ENCODE measurements at regions of chr6 and their contacts with region 1.

Region 1: DNA sequence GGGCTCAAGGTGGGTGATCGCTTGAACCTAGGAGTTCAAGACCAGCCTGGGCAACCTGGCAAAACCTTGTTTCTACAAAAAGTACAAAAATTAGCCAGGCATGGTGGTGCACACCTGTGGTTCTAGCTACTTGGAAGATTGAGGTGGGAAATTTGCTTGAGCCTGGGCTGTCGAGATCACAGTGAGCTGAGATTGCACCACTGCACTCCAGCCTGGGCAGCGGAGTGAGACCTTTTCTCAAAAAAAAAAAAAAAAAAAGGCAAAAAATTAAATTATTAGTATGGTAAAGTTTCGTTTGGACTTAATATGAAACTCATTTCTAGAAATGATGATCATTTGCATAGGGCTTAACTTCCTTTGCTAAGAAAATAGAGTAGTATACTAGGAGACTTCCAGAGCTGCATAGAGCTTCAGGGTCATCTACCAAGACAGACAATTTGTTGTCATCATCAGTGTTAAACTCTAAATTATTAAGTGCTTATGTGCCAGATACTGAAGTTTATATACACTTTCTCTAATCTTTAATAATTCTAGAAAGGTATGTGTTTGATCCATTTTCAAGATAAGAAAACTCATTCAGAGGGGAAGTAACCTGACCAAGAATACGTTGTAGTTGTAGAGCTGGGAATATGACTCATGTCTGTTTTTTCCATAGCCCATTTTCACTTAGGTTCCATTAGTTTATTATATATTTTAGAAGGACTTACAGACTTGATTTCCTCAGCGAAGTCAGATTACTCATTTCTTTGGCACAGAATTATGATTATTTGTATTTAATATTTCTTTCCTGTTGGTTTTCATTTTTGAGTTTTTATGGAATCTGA is 84.5 kb downstream of the SLC16A10 start:
- DNase-seq: no peak
- H3K4me3 Mint-ChIP-seq: no peak overlapping the region
- H3K27ac Mint-ChIP-seq: no peak overlapping the region
- H3K4me1 Mint-ChIP-seq: peaks cover 27% of the 10 kb centered on the region
- H3K27me3 Mint-ChIP-seq: no peaks in the 10 kb centered on the region

Region 2: DNA sequence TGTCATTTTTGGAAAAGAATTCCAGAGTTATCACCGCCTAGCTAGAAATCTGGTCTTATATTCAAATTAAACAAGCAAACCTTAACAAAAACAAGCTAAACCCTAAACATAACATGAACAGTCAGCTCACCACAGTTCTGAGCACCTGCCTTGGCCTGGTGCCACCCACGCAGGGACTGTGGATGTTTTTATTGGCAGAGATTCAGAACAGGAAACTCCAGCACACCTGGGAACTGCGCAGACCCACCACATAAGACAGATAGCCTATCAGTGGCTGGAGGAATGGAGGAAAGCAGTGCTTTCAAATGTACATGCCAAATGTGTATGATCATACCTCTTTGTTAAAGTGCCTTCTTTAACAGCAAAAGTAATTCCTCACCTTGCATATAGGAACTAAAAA is 75.5 kb before region 1 on chr6:
- CTCF ChIA-PET with region 1: interaction called, 4 read pairs
- intact Hi-C with region 1: loop called (anchors 2 kb)
- DNase-seq: peak; percentile 77
- H3K4me3 Mint-ChIP-seq: no peak overlapping the region
- H3K27ac Mint-ChIP-seq: peak overlapping the region; percentile 6
- H3K4me1 Mint-ChIP-seq: peaks cover 25% of the 10 kb centered on the region
- H3K27me3 Mint-ChIP-seq: no peaks in the 10 kb centered on the region

Region 3: GRCh38 chr6:111183702-111184517 is 12.1 kb after region 1 on chr6:
- CTCF ChIA-PET with region 1: interaction called, 6 read pairs
- intact Hi-C with region 1: loop called (anchors 1 kb)
- DNase-seq: no peak
- H3K4me3 Mint-ChIP-seq: no peak overlapping the region
- H3K27ac Mint-ChIP-seq: no peak overlapping the region
- H3K4me1 Mint-ChIP-seq: peaks cover 10% of the 10 kb centered on the region
- H3K27me3 Mint-ChIP-seq: no peaks in the 10 kb centered on the region

Region 4: DNA sequence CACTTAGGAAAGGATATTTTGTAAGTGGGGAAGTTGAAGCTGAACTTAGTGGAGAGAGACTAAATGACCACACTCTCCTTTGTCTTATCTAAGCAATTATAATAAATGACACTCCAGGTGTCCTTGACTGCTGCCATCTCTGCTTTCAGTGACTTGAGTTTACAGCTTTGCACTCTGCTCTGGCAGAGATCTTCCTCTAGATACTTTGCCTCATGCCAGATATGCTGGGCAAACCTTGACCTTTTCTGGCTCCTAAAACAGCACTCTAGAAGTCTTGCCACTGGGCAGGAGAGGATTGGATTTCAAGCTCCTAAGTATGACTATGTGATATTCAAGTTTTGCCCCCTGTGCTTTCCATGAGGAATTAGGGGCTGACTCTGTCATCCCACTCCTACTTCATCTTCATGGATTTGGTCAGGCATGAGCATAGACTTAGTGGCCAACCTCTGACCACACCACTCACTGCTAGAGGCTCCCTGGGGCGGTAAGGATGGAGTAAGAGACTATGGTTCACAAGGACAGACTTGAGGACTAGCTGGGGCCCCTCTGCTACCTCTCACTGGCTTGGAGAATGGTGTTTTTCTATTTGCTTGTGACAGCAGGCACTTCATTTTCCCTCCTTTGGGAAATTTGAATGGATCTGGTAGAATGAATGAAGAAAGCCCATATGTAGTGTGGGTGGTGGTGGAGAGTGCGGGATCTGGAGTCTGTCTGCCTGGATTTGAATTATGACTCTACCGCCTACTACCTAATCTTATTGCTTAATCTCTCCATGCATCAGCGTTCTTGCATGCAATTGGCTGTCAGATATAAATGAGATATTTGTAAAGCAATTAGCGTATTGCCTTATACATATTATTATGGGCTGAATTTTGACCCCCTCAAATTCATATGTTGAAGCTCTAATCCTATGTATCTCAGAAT is 119.8 kb after region 1 on chr6:
- CTCF ChIA-PET with region 1: no interaction called
- intact Hi-C with region 1: no loop called
- DNase-seq: no peak
- H3K4me3 Mint-ChIP-seq: no peak overlapping the region
- H3K27ac Mint-ChIP-seq: no peak overlapping the region
- H3K4me1 Mint-ChIP-seq: peaks cover 24% of the 10 kb centered on the region
- H3K27me3 Mint-ChIP-seq: no peaks in the 10 kb centered on the region

Region 5: DNA sequence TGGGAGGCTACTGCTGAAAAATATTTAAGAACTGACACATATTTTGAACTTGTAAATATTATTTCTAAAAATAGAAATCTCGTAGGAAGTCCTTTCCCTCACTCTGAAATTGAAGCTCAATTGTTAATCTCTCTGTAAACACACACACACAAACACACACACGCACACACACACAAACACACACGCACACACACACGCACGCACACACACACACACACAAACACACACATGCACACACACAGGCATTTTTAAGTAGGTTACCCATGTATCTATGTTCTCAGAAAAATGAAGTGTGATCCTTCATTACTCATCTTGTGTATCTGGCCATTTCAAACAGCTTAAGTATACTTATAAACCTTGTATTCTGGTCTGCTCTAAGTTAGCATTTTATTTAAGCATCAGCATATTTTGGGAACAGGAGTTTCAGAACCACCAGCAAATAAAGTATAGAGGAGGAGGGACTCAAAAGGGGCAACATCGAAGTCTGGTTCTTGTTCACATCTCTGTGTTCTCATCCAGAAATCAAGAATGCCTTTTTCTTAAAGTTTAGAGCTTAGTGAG is 893.7 kb after region 1 on chr6:
- CTCF ChIA-PET with region 1: no interaction called
- intact Hi-C with region 1: no loop called
- DNase-seq: no peak
- H3K4me3 Mint-ChIP-seq: no peak overlapping the region
- H3K27ac Mint-ChIP-seq: no peak overlapping the region
- H3K4me1 Mint-ChIP-seq: peaks cover 2% of the 10 kb centered on the region
- H3K27me3 Mint-ChIP-seq: no peaks in the 10 kb centered on the region